Activated naive CD4-positive, alpha-beta T cell treated with anti-CD3 and anti-CD28 coated beads for 36 hours (primary cell): ENCODE measurements at regions of chr11 and their contacts with region 1.

Region 1: GRCh38 chr11:13276832-13277767 is 490 bp upstream of the BMAL1 start:
- DNase-seq: peak; percentile 98
- H3K4me3 Mint-ChIP-seq: peak overlapping the region; percentile 94
- H3K27ac Mint-ChIP-seq: peak overlapping the region; percentile 74
- H3K4me1 Mint-ChIP-seq: peaks cover 42% of the 10 kb centered on the region
- H3K27me3 Mint-ChIP-seq: no peaks in the 10 kb centered on the region

Region 2: GRCh38 chr11:13052130-13052605 is 224.9 kb before region 1 on chr11:
- CTCF ChIA-PET with region 1: no interaction called
- intact Hi-C with region 1: no loop called
- DNase-seq: no peak
- H3K4me3 Mint-ChIP-seq: no peak overlapping the region
- H3K27ac Mint-ChIP-seq: no peak overlapping the region
- H3K4me1 Mint-ChIP-seq: peaks cover 4% of the 10 kb centered on the region
- H3K27me3 Mint-ChIP-seq: peaks cover 12% of the 10 kb centered on the region

Region 3: DNA sequence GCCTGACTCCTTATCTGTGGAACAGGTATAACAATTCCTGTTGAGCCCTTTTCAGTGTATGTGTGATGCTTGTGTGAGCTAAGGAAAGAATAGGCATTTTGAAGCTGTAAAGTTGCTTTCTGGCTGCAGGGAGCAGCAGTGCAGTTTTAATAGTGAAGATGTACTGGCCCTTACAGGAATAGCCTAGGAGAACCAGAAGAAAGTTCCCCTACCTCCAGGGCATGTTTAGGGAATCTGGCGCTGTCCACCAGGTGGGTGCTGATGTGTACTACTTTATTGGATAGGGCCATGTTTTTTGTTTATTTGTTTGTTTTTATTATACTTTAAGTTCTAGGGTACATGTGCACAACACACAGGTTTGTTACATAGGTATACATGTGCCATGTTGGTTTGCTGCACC is 12.0 kb after region 1 on chr11:
- CTCF ChIA-PET with region 1: no interaction called
- intact Hi-C with region 1: loop called (anchors 1 kb)
- DNase-seq: no peak
- H3K4me3 Mint-ChIP-seq: no peak overlapping the region
- H3K27ac Mint-ChIP-seq: no peak overlapping the region
- H3K4me1 Mint-ChIP-seq: peaks cover 76% of the 10 kb centered on the region
- H3K27me3 Mint-ChIP-seq: no peaks in the 10 kb centered on the region

Region 4: GRCh38 chr11:13316528-13316961 is 39.4 kb after region 1 on chr11:
- CTCF ChIA-PET with region 1: interaction called, 3 read pairs
- intact Hi-C with region 1: loop called (anchors 5 kb)
- DNase-seq: peak; percentile 26
- H3K4me3 Mint-ChIP-seq: no peak overlapping the region
- H3K27ac Mint-ChIP-seq: peak overlapping the region; percentile 33
- H3K4me1 Mint-ChIP-seq: peaks cover 68% of the 10 kb centered on the region
- H3K27me3 Mint-ChIP-seq: no peaks in the 10 kb centered on the region

Region 5: DNA sequence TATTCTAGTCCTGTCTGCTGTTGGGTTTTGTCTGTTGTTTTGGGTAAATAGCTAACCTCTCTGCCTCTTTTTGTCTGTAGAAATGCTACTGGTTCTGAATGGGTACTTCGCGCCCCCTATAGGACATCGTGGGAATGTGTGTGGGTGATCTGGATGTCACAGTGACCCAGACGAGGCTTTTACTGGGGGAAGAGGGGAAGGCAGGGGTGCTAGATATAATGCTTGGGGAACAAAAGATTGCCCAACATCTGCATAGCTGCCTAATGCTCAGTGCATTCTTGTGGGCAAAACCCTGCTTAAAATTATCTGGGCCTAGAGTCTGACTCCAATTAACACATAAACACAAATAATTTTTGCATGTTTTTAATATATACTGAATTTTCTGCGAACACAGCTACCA is 58.2 kb after region 1 on chr11:
- CTCF ChIA-PET with region 1: interaction called, 20 read pairs
- intact Hi-C with region 1: loop called (anchors 1 kb)
- DNase-seq: peak; percentile 86
- H3K4me3 Mint-ChIP-seq: no peak overlapping the region
- H3K27ac Mint-ChIP-seq: no peak overlapping the region
- H3K4me1 Mint-ChIP-seq: peaks cover 76% of the 10 kb centered on the region
- H3K27me3 Mint-ChIP-seq: no peaks in the 10 kb centered on the region

Region 6: GRCh38 chr11:13668102-13668956 is 391.2 kb after region 1 on chr11 and contains the start of gene FAR1:
- CTCF ChIA-PET with region 1: no interaction called
- intact Hi-C with region 1: loop called (anchors 1 kb)
- DNase-seq: peak; percentile 98
- H3K4me3 Mint-ChIP-seq: peak within 1 kb of the TSS; percentile 95
- H3K27ac Mint-ChIP-seq: peak within 1 kb of the TSS; percentile 92
- H3K4me1 Mint-ChIP-seq: peaks cover 40% of the 10 kb centered on the region
- H3K27me3 Mint-ChIP-seq: peaks cover 7% of the 10 kb centered on the region
- total RNA-seq, gene FAR1: 37.2 to 42.3 TPM